ENCODE measurements at regions of chr15 and their contacts with region 1.

Region 1: DNA sequence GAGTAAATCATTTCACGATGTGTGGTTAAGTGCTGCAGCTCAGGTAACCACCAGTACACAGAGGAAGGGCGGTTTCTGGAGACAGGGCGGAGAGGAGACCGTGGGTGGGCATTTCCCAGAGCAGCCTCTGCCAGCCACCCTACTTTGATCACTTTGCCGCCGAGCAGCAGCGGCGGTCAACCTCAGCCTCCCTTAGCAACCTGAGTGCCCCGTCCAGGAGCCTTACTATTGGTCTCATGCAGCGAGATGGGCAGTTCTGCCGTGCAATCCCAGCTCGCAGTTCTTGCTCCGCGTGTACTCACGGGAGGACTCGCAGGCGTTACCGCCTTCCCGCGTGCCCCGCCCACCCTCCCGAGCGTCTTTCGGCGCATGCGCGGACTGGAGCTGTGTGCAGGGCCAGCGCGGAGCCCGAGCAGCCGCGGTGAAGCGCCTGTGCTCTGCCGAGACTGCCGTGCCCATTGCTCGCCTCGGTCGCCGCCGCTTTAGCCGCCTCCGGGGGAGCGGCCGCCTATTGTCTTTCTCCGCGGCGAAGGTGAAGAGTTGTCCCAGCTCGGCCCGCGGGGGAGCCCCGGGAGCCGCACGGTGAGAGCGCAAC is at the start of gene AKAP13:
- DNase-seq: peak; percentile 99
- H3K4me3 Mint-ChIP-seq: peak within 1 kb of the TSS; percentile 79
- H3K27ac Mint-ChIP-seq: peak within 1 kb of the TSS; percentile 79
- H3K4me1 Mint-ChIP-seq: peaks cover 35% of the 10 kb centered on the region
- H3K27me3 Mint-ChIP-seq: no peaks in the 10 kb centered on the region
- CTCF ChIP-seq: no peak
- total RNA-seq, gene AKAP13: 65.7 and 92.9 TPM in 2 replicates

Region 2: GRCh38 chr15:85284497-85284896 is 95.8 kb before region 1 on chr15:
- CTCF ChIA-PET with region 1: no interaction called
- POLR2A ChIA-PET with region 1: no interaction called
- intact Hi-C with region 1: no loop called
- DNase-seq: no peak
- H3K4me3 Mint-ChIP-seq: no peak overlapping the region
- H3K27ac Mint-ChIP-seq: no peak overlapping the region
- H3K4me1 Mint-ChIP-seq: peaks cover 6% of the 10 kb centered on the region
- H3K27me3 Mint-ChIP-seq: no peaks in the 10 kb centered on the region
- CTCF ChIP-seq: no peak

Region 3: DNA sequence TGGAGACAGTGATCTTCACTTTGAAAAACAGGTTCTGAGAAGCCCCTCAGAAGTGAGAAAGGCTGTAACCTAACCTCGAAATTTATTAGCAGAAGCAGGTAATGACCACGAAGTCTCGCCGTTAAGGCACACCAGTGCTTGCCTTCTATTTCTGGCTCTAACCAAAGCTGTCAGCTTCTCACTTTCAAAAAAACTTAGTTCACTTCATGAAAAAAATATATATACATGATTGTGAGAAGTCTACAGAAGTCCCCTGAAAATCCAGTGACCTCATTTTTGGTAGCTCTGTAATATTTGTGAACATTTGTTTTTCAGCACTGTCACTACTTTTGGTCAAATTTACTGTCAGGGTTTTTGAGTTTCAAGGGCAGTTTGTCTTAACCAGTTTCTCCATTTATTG is 19.0 kb before region 1 on chr15:
- CTCF ChIA-PET with region 1: interaction called, 4 read pairs
- POLR2A ChIA-PET with region 1: interaction called, 65 read pairs
- intact Hi-C with region 1: no loop called
- DNase-seq: no peak
- H3K4me3 Mint-ChIP-seq: no peak overlapping the region
- H3K27ac Mint-ChIP-seq: no peak overlapping the region
- H3K4me1 Mint-ChIP-seq: peaks cover 26% of the 10 kb centered on the region
- H3K27me3 Mint-ChIP-seq: no peaks in the 10 kb centered on the region
- CTCF ChIP-seq: no peak

Region 4: DNA sequence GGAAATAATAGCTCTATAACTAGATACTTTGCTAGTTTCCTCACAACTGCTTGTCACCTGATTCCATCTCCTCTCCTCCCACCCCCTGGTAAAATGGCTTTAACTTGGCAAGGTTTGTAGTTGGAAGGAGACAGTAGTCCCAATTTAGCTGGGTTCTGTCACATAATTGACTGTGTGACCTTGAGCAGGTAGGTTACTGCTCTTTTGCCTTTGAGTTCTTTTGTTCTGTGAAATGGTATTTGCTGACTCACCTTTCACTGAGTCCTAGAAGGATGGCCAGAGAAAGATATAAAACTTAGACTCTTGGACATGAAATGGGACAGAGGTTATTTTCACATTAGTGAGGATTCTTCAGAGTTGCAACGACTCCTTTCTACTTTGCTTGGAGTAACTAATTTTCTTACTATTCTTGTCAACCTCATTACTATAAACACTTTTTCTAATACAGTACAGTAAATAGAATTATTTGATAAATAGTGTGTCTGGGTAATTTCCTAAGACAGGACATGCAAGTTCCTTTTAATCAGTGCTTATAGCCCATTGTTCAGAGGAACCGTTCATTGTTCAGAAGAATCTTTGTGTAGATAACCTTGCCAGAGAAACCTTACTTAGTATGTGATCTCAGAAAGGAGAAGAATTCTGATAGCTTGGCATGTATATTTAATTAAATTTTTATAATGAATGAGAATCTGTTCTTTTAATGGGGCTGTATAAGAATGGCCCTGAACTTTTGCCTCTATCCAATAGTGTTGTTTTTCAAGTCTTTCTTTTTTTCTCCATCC is 14.4 kb after region 1 on chr15:
- CTCF ChIA-PET with region 1: interaction called, 3 read pairs
- POLR2A ChIA-PET with region 1: interaction called, 14 read pairs
- intact Hi-C with region 1: no loop called
- DNase-seq: no peak
- H3K4me3 Mint-ChIP-seq: no peak overlapping the region
- H3K27ac Mint-ChIP-seq: no peak overlapping the region
- H3K4me1 Mint-ChIP-seq: peaks cover 26% of the 10 kb centered on the region
- H3K27me3 Mint-ChIP-seq: no peaks in the 10 kb centered on the region
- CTCF ChIP-seq: no peak

Region 5: DNA sequence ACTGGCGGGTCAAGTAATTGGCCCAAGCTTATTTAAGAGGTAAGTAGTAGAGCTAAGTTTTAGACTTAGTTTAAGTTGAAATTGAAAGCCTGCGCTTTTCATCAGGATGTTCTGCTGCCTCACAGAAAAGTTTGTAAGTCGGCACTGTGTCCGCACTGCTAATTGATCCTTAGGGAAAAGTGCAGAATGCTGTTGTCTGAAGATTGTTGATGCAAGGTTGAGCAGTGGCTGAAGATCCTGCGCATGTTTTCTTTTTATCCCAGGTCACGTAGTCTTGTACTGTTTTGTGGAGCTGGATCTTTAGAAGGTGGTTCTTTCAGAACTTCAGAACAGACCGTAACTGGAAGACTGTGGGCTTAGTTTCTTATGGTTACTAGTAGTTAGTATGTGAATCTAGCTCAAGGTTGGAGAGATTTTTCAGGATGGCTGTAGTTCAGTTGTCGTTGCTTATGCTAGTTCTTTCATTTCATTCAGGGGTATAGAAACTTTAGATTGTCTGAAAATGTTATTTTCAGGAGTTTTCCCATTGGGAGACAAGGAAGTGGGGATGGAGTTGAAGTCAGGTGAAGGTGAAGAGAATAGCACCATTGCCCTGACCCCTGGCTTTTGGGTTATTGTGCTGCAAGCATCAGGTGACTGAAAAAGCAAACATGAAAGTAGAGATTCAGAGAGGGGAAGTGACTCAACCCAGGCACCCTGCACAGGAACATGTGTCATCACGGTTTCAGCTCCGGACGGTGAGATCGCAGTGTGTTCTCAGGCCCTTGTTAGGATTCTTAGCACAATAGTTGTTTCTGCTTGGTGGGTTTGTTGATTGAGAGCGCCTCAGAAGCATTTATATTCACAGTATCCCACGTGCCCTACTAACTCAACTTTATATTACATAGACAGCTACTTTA is 32.9 kb after region 1 on chr15:
- CTCF ChIA-PET with region 1: interaction called, 12 read pairs
- POLR2A ChIA-PET with region 1: interaction called, 94 read pairs
- intact Hi-C with region 1: loop called (anchors 1 kb)
- DNase-seq: peak; percentile 97
- H3K4me3 Mint-ChIP-seq: peak overlapping the region; percentile 60
- H3K27ac Mint-ChIP-seq: peak overlapping the region; percentile 94
- H3K4me1 Mint-ChIP-seq: peaks cover 57% of the 10 kb centered on the region
- H3K27me3 Mint-ChIP-seq: no peaks in the 10 kb centered on the region
- CTCF ChIP-seq: no peak

Measured in MCF 10A (cell line).